HCT116 (cell line): ENCODE measurements at regions of chr22 and their contacts with region 1.

Region 1: GRCh38 chr22:35350539-35351503 is 30.1 kb upstream of the HMOX1 start:
- DNase-seq: peak; percentile 81
- ATAC-seq: peak; percentile 99
- H3K4me3 ChIP-seq: peak overlapping the region; percentile 20 to 47; a peak in 3 of 4 replicates
- H3K27ac ChIP-seq: peak overlapping the region; percentile 34; the same call in 1 of the 2 replicates
- H3K4me1 ChIP-seq: peaks cover 2 to 27% of the 10 kb centered on the region in 2 experiments; a peak in 3 of 4 replicates
- H3K27me3 ChIP-seq: no peaks in the 10 kb centered on the region
- CTCF ChIP-seq: peak; percentile 54 to 75 (median 70)
- POLR2A ChIP-seq: peak; percentile 28
- RAD21 ChIP-seq: peak; percentile 97

Region 2: DNA sequence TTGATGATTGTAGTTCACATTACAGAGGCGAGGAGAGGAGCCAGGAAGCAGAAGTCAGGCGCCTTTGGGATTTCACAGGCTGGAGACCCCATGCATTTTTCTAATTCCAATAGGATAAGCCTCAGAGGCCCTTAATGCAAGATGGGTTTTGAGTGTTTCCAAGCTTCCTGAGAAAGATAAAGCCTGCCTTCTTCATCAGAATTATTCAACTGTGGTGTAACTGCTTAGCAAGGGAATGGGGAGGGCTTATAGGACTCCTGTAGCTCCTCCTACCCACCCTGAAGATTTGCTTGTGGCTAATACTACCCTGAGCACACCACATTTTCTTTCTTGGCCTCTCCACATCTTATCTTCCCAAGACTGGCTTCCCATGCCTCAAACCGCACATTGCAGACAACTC is 436.0 kb before region 1 on chr22:
- CTCF ChIA-PET with region 1: no interaction called
- POLR2A ChIA-PET with region 1: no interaction called
- RAD21 ChIA-PET with region 1: no interaction called
- intact Hi-C with region 1: no loop called
- DNase-seq: no peak
- ATAC-seq: no peak
- H3K4me3 ChIP-seq: no peak overlapping the region
- H3K27ac ChIP-seq: no peak overlapping the region
- H3K4me1 ChIP-seq: no peaks in the 10 kb centered on the region
- H3K27me3 ChIP-seq: peaks cover 7% of the 10 kb centered on the region; the same call in 1 of the 2 replicates
- CTCF ChIP-seq: no peak
- POLR2A ChIP-seq: no peak
- RAD21 ChIP-seq: no peak

Region 3: GRCh38 chr22:35275580-35275979 is 75.2 kb before region 1 on chr22:
- CTCF ChIA-PET with region 1: no interaction called
- POLR2A ChIA-PET with region 1: no interaction called
- RAD21 ChIA-PET with region 1: no interaction called
- intact Hi-C with region 1: no loop called
- DNase-seq: no peak
- ATAC-seq: no peak
- H3K4me3 ChIP-seq: no peak overlapping the region
- H3K27ac ChIP-seq: no peak overlapping the region
- H3K4me1 ChIP-seq: peaks cover 0 to 5% of the 10 kb centered on the region in 2 experiments; a peak in 1 of 4 replicates
- H3K27me3 ChIP-seq: no peaks in the 10 kb centered on the region
- CTCF ChIP-seq: no peak
- POLR2A ChIP-seq: no peak
- RAD21 ChIP-seq: no peak

Region 4: DNA sequence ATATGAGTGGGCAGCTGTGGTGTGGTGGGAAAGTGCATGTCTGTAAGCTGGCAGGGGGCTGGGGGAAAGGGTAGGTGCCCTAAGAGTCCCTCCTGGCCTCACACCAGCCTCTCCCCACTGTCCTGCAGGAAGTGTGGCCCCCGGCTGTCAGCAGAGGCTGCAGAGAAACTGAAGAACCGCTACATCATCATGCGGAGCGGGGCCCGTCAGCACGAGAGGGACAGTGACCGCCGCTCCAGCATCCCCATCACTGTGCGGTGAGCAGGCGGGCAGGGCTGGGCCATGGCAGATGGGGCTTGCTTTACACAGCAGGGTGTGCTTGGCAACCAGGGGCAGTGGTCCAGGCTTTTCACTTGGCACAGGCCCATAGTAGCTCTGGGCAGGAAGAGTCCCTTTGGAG is 68.9 kb after region 1 on chr22:
- CTCF ChIA-PET with region 1: no interaction called
- POLR2A ChIA-PET with region 1: no interaction called
- RAD21 ChIA-PET with region 1: no interaction called
- intact Hi-C with region 1: no loop called
- DNase-seq: no peak
- ATAC-seq: no peak
- H3K4me3 ChIP-seq: no peak overlapping the region
- H3K27ac ChIP-seq: no peak overlapping the region
- H3K4me1 ChIP-seq: no peaks in the 10 kb centered on the region
- H3K27me3 ChIP-seq: no peaks in the 10 kb centered on the region
- CTCF ChIP-seq: no peak
- POLR2A ChIP-seq: no peak
- RAD21 ChIP-seq: no peak

Region 5: DNA sequence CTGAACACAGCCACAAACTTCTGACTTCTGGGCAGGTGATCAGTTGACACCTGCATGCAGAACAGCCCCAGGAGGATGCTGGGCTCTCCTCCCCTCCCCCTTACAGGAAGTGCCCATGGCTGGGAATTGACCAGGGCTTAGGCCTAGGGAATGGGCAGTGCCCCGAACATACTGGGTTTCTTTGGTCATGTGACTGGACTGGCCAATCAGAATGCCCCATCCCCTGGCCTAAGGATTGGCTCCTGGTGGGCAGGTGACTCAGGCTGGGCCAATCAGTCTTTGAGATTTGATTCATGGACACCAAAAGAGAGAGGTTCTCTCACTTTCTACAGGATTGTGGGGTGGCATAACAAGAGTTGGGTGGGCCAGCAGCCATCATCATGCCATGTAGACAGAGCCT is 86.2 kb after region 1 on chr22:
- CTCF ChIA-PET with region 1: no interaction called
- POLR2A ChIA-PET with region 1: no interaction called
- RAD21 ChIA-PET with region 1: no interaction called
- intact Hi-C with region 1: no loop called
- DNase-seq: peak; percentile 38
- ATAC-seq: peak; percentile 85
- H3K4me3 ChIP-seq: no peak overlapping the region
- H3K27ac ChIP-seq: no peak overlapping the region; the same call in 1 of the 2 replicates
- H3K4me1 ChIP-seq: peaks cover 0 to 4% of the 10 kb centered on the region in 2 experiments; a peak in 1 of 4 replicates
- H3K27me3 ChIP-seq: no peaks in the 10 kb centered on the region
- CTCF ChIP-seq: no peak
- POLR2A ChIP-seq: no peak
- RAD21 ChIP-seq: no peak

Region 6: GRCh38 chr22:35477911-35478582 is 127.2 kb after region 1 on chr22:
- CTCF ChIA-PET with region 1: interaction called, 3 read pairs
- POLR2A ChIA-PET with region 1: no interaction called
- RAD21 ChIA-PET with region 1: no interaction called
- intact Hi-C with region 1: loop called (anchors 5 kb)
- DNase-seq: peak; percentile 27
- ATAC-seq: peak; percentile 56
- H3K4me3 ChIP-seq: peak overlapping the region in 1 of 2 experiments; percentile 28; a peak in 1 of 4 replicates
- H3K27ac ChIP-seq: peak overlapping the region; percentile 69
- H3K4me1 ChIP-seq: peaks cover 14 to 26% of the 10 kb centered on the region in 2 experiments
- H3K27me3 ChIP-seq: no peaks in the 10 kb centered on the region
- CTCF ChIP-seq: no peak
- POLR2A ChIP-seq: no peak
- RAD21 ChIP-seq: no peak

Region 7: GRCh38 chr22:35921777-35922176 is 571.0 kb after region 1 on chr22:
- CTCF ChIA-PET with region 1: no interaction called
- POLR2A ChIA-PET with region 1: no interaction called
- RAD21 ChIA-PET with region 1: no interaction called
- intact Hi-C with region 1: loop called (anchors 10 kb)
- DNase-seq: peak; percentile 76
- ATAC-seq: peak; percentile 99
- H3K4me3 ChIP-seq: no peak overlapping the region
- H3K27ac ChIP-seq: peak overlapping the region; percentile 53
- H3K4me1 ChIP-seq: peaks cover 7 to 27% of the 10 kb centered on the region in 2 experiments
- H3K27me3 ChIP-seq: no peaks in the 10 kb centered on the region
- CTCF ChIP-seq: peak; percentile 50 to 81 (median 75)
- POLR2A ChIP-seq: no peak
- RAD21 ChIP-seq: peak; percentile 90